ENCODE measurements at regions of chr5 and their contacts with region 1.

Region 1: DNA sequence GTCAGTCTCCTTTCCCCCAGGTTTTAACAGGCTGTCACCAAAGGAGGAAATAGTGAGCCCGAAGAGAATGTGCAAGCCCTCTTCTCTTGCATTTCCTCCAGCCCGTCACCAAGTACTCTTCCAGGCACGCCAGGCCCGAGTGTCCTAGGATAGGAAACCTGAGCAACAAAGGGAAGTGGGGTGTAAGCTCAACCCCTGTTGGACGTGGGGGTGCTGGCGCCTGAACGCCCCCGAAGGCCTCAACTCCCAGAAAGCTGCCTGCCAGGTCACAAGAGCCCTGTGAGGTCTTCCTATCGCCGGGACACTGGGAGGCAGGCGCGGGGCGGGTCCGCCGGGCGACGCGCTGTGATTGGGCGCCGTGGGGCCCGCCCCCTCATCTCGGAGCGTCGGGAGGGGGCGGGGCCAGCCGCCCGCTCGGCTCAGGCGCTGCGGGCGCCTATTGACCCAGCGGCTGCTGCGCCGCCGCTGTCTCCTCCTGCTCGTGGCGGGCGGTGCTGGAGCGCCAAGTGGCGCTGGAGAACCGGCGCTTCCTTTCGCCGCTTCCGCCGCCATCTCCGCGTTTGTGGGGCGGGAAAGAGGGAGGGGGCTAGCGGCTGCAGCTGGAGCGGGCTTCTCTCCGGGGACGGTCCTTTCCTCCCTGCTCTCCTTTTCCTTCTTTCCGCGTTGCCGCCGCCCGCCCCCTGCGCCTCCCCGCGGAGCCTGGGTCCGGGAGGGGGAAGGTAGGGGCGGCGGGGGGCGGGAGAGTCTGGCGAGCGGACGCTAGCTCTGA is 572 bp upstream of the MAN2A1 start:
- DNase-seq: peak; percentile 89
- ATAC-seq: peak; percentile 89
- H3K4me3 ChIP-seq: peak overlapping the region; percentile 84 to 91 (median 89)
- H3K27ac ChIP-seq: peak overlapping the region; percentile 90
- H3K4me1 ChIP-seq: peaks cover 38% of the 10 kb centered on the region
- H3K27me3 ChIP-seq: no peaks in the 10 kb centered on the region; a peak in 1 of 5 replicates
- CTCF ChIP-seq: no peak; the same call in none of the 2 replicates
- EP300 ChIP-seq: no peak
- POLR2A ChIP-seq: peak; percentile 92 to 94
- RAD21 ChIP-seq: peak; percentile 49; the same call in 1 of the 2 replicates

Region 2: DNA sequence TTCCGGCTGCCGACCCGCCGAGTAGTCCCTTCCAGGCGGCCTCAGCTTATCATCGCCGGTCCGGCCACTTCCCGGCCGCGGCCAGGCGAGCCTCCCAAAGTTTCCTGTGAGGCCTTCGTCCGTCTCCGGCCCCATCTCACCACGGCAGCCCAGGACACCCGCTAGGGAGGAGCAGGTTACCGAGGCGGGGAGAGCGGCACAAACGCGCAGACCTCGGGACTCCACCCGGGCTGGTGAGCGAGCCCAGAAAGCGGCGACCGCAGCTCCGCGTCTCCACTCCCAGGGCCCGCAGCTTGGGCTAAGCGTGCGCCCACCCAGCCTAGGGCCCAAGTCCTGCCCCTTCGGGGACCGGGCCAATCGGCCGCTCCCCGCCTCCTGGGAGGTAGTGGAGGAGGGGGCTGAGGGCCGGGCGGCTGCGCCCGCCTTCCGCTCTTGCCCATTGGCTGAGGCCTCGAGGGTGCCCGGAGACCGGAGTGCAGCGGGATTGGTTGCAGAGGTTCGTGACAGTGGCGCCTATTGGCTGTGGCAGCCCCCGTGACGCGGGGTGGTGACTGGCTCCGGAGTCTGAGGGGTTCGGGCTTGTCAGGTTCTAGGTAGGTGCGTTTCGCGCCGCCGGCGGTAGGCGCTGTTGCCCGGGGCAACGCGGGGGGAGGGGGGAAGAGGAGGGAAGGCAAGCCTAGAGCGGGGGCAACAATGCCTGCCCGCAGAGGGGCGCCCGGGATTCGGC is 940.6 kb before region 1 on chr5:
- CTCF ChIA-PET with region 1: no interaction called
- POLR2A ChIA-PET with region 1: interaction called, 4 read pairs
- in situ Hi-C with region 1: no loop called
- intact Hi-C with region 1: loop called (anchors 5 kb)
- DNase-seq: peak; percentile 96
- ATAC-seq: peak; percentile 98
- H3K4me3 ChIP-seq: peak overlapping the region; percentile 80 to 83 (median 80)
- H3K27ac ChIP-seq: peak overlapping the region; percentile 81
- H3K4me1 ChIP-seq: peaks cover 14% of the 10 kb centered on the region
- H3K27me3 ChIP-seq: peaks cover 0 to 4% of the 10 kb centered on the region in 2 experiments; a peak in 1 of 5 replicates
- CTCF ChIP-seq: peak; percentile 69
- EP300 ChIP-seq: no peak
- POLR2A ChIP-seq: peak; percentile 96 to 99
- RAD21 ChIP-seq: peak; percentile 50; the same call in 1 of the 2 replicates

Region 3: GRCh38 chr5:109485030-109485429 is 204.1 kb before region 1 on chr5:
- CTCF ChIA-PET with region 1: no interaction called
- POLR2A ChIA-PET with region 1: no interaction called
- in situ Hi-C with region 1: no loop called
- intact Hi-C with region 1: loop called (anchors 5 kb)
- DNase-seq: peak; percentile 92
- ATAC-seq: peak; percentile 97
- H3K4me3 ChIP-seq: peak overlapping the region in 2 of 3 experiments; percentile 4 to 20; a peak in 2 of 6 replicates
- H3K27ac ChIP-seq: peak overlapping the region; percentile 12
- H3K4me1 ChIP-seq: peaks cover 41% of the 10 kb centered on the region
- H3K27me3 ChIP-seq: no peaks in the 10 kb centered on the region
- CTCF ChIP-seq: no peak
- EP300 ChIP-seq: peak in 1 of 2 experiments; percentile 85; a peak in 2 of 4 replicates
- POLR2A ChIP-seq: no peak
- RAD21 ChIP-seq: no peak

Region 4: DNA sequence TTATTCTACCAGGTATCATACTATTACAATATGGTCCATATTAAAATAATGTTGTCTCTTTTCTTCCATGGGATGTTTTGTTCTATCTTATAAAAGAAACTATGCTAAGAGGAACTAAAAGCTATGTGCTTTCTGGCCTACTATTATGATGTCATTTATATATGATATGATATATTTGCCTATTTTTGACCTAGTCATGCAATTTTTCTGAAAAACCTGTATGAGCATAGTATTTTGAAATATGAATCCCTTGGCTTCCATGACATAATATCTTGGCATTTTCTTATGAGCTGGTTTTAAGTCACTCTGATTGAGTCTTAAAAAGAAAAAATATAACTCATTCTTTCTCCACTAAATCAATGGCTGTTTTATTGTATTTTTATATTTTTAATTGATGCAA is 61.3 kb after region 1 on chr5:
- CTCF ChIA-PET with region 1: no interaction called
- POLR2A ChIA-PET with region 1: no interaction called
- in situ Hi-C with region 1: no loop called
- intact Hi-C with region 1: loop called (anchors 5 kb)
- DNase-seq: no peak
- ATAC-seq: no peak
- H3K4me3 ChIP-seq: no peak overlapping the region
- H3K27ac ChIP-seq: no peak overlapping the region
- H3K4me1 ChIP-seq: peaks cover 12% of the 10 kb centered on the region
- H3K27me3 ChIP-seq: no peaks in the 10 kb centered on the region
- CTCF ChIP-seq: no peak
- EP300 ChIP-seq: no peak
- POLR2A ChIP-seq: no peak
- RAD21 ChIP-seq: no peak

Region 5: GRCh38 chr5:110001648-110002047 is 312.5 kb after region 1 on chr5:
- CTCF ChIA-PET with region 1: no interaction called
- POLR2A ChIA-PET with region 1: interaction called, 5 read pairs
- in situ Hi-C with region 1: loop called (anchors 5 kb)
- intact Hi-C with region 1: loop called (anchors 2 kb)
- DNase-seq: no peak
- ATAC-seq: no peak
- H3K4me3 ChIP-seq: no peak overlapping the region
- H3K27ac ChIP-seq: no peak overlapping the region
- H3K4me1 ChIP-seq: peaks cover 48% of the 10 kb centered on the region
- H3K27me3 ChIP-seq: no peaks in the 10 kb centered on the region
- CTCF ChIP-seq: no peak
- EP300 ChIP-seq: no peak
- POLR2A ChIP-seq: no peak
- RAD21 ChIP-seq: no peak

Region 6: DNA sequence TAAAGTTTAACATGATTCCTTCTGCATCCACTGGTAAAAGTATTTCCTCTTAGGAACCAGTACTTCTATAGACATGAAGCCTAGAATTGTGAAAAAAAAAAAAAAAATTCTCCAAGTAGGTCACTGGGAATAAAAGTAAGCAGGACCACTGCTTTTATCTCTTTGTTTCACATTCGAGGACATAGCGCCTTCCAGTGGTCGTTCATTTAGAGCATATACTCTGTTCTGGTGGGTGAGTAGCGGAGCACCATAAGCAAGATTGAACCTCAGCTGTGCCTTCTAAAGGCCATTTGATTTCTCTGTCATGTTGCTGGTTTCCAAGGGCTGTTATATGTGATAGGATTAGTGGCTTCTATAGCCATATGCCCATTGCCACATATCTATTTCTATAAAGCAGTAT is 644.2 kb after region 1 on chr5:
- CTCF ChIA-PET with region 1: no interaction called
- POLR2A ChIA-PET with region 1: no interaction called
- in situ Hi-C with region 1: loop called (anchors 25 kb)
- intact Hi-C with region 1: no loop called
- DNase-seq: peak; percentile 24
- ATAC-seq: peak; percentile 61; the same call in 2 of the 3 replicates
- H3K4me3 ChIP-seq: no peak overlapping the region
- H3K27ac ChIP-seq: no peak overlapping the region
- H3K4me1 ChIP-seq: no peaks in the 10 kb centered on the region; the same call in 1 of the 2 replicates
- H3K27me3 ChIP-seq: no peaks in the 10 kb centered on the region
- CTCF ChIP-seq: peak; percentile 62
- EP300 ChIP-seq: no peak
- POLR2A ChIP-seq: no peak
- RAD21 ChIP-seq: no peak

Measured in HepG2 (cell line).